ENCODE measurements at regions of chr20 and their contacts with region 1.

Region 1: GRCh38 chr20:36951198-36951976 is at the start of gene SAMHD1:
- DNase-seq: peak; percentile 96 to 99 (median 98)
- ATAC-seq: peak; percentile 96 to 99 (median 98)
- H3K4me3 ChIP-seq: peak within 1 kb of the TSS; percentile 85 to 100 (median 93)
- H3K27ac ChIP-seq: peak within 1 kb of the TSS; percentile 83 to 98 (median 90)
- H3K4me1 ChIP-seq: peaks cover 3 to 65% (median 10%) of the 10 kb centered on the region in 12 donors
- H3K27me3 ChIP-seq: no peaks in the 10 kb centered on the region
- CTCF ChIP-seq: peak in 4 of 12 donors; percentile 5 to 18 (median 9)
- POLR2A ChIP-seq: peak in 1 of 2 donors; percentile 96
- total RNA-seq, gene SAMHD1: 13.9 to 164 (median 47.0) TPM

Region 2: GRCh38 chr20:36676701-36677421 is 274.5 kb before region 1 on chr20:
- intact Hi-C with region 1: no loop called
- DNase-seq: no peak
- ATAC-seq: peak in 3 of 4 donors; percentile 34 to 45 (median 45)
- H3K4me3 ChIP-seq: no peak overlapping the region
- H3K27ac ChIP-seq: no peak overlapping the region
- H3K4me1 ChIP-seq: no peaks in the 10 kb centered on the region
- H3K27me3 ChIP-seq: no peaks in the 10 kb centered on the region
- CTCF ChIP-seq: no peak
- POLR2A ChIP-seq: no peak

Region 3: GRCh38 chr20:36847009-36847709 is 104.2 kb before region 1 on chr20:
- intact Hi-C with region 1: no loop called
- DNase-seq: peak in 4 of 5 donors; percentile 76 to 92 (median 83)
- ATAC-seq: peak; percentile 82 to 90 (median 89)
- H3K4me3 ChIP-seq: no peak overlapping the region
- H3K27ac ChIP-seq: peak overlapping the region; percentile 64 to 95 (median 85)
- H3K4me1 ChIP-seq: peaks cover 0 to 89% (median 70%) of the 10 kb centered on the region in 12 donors
- H3K27me3 ChIP-seq: no peaks in the 10 kb centered on the region
- CTCF ChIP-seq: no peak
- POLR2A ChIP-seq: no peak

Region 4: DNA sequence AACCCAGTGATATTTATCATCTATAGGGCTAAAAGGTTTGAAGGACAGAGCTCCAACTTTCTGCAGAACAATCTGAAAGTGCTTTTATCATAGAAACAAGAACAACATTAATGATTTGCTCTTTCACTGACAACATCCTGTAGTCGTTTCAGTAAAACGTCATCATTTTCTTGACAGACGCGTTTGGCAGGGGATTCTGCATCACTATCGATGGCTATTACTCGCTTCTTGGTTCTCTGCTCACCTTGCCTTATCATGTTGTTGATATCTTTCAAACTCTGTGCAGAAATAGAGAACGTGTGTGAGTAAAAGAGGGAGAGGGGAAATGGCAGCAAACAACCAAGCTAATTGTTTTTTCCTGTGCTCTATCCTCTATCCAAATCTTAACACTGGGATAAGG is 47.3 kb after region 1 on chr20:
- intact Hi-C with region 1: no loop called
- DNase-seq: no peak
- ATAC-seq: no peak
- H3K4me3 ChIP-seq: no peak overlapping the region
- H3K27ac ChIP-seq: no peak overlapping the region
- H3K4me1 ChIP-seq: no peaks in the 10 kb centered on the region
- H3K27me3 ChIP-seq: no peaks in the 10 kb centered on the region
- CTCF ChIP-seq: no peak
- POLR2A ChIP-seq: no peak

Region 5: GRCh38 chr20:37090407-37090806 is 139.0 kb after region 1 on chr20:
- intact Hi-C with region 1: loop called in 1 of 10 experiments (anchors 5 kb)
- DNase-seq: no peak
- ATAC-seq: no peak
- H3K4me3 ChIP-seq: no peak overlapping the region
- H3K27ac ChIP-seq: no peak overlapping the region
- H3K4me1 ChIP-seq: peaks cover 0 to 16% (median 8%) of the 10 kb centered on the region in 12 donors
- H3K27me3 ChIP-seq: no peaks in the 10 kb centered on the region
- CTCF ChIP-seq: no peak
- POLR2A ChIP-seq: no peak

Region 6: DNA sequence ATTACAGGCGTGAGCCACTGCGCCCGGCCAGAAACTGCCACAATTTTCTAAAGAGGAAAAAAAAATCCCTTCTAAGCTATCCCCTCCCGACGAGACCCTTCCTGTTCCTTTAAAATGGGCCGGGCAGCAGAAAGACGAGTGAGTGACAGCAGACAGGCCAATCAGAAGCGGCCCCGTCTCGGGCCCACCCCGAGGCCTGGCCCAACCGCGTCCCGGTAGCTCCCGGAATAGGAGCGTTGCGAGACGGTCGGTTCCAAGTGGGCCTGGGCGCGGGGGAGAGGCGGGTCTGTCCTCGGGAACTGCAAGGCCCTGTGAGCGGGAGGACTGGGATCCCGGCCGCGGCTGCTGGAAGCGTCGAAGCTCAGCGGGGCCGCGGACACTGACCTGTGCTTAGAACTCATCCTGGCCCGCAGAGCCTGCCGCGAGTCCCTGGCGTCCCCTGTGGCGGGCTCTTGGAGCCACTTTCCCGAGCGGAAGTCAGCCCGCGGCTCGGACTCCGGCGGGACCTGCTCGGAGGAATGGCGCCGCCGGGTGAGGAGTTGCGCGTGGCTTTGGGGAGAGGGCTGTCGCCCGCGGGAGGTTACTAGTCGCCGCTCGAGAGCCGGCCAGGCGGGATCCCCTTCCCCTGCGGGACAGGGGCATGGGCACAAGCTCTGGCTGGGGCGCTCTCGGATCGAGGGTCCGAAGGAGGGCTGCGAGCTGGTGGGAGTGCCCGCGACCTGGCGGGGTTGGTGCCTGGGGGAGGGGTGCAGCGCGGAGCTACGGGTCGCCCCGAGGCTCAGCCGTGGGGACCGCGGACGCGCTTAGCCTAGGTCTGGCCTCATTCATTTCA is 227.7 kb after region 1 on chr20 and contains the starts of genes MROH8 and RPN2:
- intact Hi-C with region 1: loop called in 1 of 10 experiments (anchors 5 kb)
- DNase-seq: peak; percentile 98 to 99 (median 98)
- ATAC-seq: peak; percentile 98 to 99 (median 98)
- H3K4me3 ChIP-seq: peak within 1 kb of the TSS; percentile 63 to 94 (median 81)
- H3K27ac ChIP-seq: peak within 1 kb of the TSS; percentile 90 to 100 (median 96)
- H3K4me1 ChIP-seq: peaks cover 6 to 40% (median 19%) of the 10 kb centered on the region in 12 donors
- H3K27me3 ChIP-seq: no peaks in the 10 kb centered on the region
- CTCF ChIP-seq: no peak
- POLR2A ChIP-seq: peak in 1 of 2 donors; percentile 72
- total RNA-seq, gene MROH8: 3.5 to 8.1 (median 5.5) TPM
- total RNA-seq, gene RPN2: 74.6 to 174 (median 105) TPM

Region 7: GRCh38 chr20:37223053-37223452 is 271.7 kb after region 1 on chr20:
- intact Hi-C with region 1: no loop called
- DNase-seq: no peak
- ATAC-seq: peak in 3 of 4 donors; percentile 65 to 79 (median 67)
- H3K4me3 ChIP-seq: no peak overlapping the region
- H3K27ac ChIP-seq: peak overlapping the region in 2 of 12 donors; percentile 33 to 35
- H3K4me1 ChIP-seq: peaks cover 0 to 40% (median 16%) of the 10 kb centered on the region in 12 donors
- H3K27me3 ChIP-seq: no peaks in the 10 kb centered on the region
- CTCF ChIP-seq: no peak
- POLR2A ChIP-seq: no peak